ENCODE measurements at regions of chr7 and their contacts with region 1.

Region 1: GRCh38 chr7:362402-363096 is 72.6 kb downstream of the FOXL3 start:
- H3K4me3 ChIP-seq: no peak overlapping the region
- H3K27ac ChIP-seq: no peak overlapping the region
- H3K4me1 ChIP-seq: no peaks in the 10 kb centered on the region
- CTCF ChIP-seq: no peak

Region 2: DNA sequence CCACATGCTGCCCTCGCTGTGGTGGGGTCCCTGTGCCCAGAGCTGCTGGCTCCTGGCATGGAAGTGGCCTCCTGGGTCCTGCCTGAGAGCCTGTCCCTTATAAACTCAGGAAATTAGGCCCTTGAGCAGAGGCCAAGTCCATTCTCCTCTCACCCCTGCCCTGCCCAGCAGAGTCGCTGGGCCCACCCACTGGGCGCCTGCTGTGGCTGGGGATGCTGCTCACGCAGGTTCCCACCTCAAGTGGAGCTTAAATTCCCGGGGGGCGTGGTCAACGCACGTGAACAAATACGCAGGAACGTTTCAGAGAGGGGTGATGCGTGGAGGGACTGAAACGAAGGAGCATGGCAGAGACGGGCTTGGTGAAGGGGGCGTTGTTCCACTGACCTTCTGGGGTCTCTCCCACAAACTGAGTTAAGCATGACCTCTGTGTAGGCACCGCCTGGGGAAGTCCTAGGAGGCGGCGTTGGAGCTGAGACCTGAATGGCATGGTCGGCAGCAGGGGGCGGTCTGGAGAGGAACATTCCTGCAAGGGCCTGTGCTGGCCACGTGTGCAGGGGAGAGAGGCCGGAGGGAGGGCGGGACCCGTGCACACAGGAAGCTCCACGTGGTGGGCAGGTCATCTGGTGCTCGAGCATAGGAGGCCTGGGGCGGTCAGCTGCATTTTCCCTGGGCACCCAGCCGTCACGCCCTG is 142.3 kb before region 1 on chr7:
- CTCF ChIA-PET with region 1: no interaction called
- POLR2A ChIA-PET with region 1: no interaction called
- H3K4me3 ChIP-seq: no peak overlapping the region
- H3K27ac ChIP-seq: no peak overlapping the region
- H3K4me1 ChIP-seq: no peaks in the 10 kb centered on the region
- CTCF ChIP-seq: no peak

Region 3: GRCh38 chr7:240791-241421 is 121.6 kb before region 1 on chr7:
- CTCF ChIA-PET with region 1: no interaction called
- POLR2A ChIA-PET with region 1: no interaction called
- H3K4me3 ChIP-seq: no peak overlapping the region
- H3K27ac ChIP-seq: no peak overlapping the region
- H3K4me1 ChIP-seq: no peaks in the 10 kb centered on the region
- CTCF ChIP-seq: no peak

Region 4: DNA sequence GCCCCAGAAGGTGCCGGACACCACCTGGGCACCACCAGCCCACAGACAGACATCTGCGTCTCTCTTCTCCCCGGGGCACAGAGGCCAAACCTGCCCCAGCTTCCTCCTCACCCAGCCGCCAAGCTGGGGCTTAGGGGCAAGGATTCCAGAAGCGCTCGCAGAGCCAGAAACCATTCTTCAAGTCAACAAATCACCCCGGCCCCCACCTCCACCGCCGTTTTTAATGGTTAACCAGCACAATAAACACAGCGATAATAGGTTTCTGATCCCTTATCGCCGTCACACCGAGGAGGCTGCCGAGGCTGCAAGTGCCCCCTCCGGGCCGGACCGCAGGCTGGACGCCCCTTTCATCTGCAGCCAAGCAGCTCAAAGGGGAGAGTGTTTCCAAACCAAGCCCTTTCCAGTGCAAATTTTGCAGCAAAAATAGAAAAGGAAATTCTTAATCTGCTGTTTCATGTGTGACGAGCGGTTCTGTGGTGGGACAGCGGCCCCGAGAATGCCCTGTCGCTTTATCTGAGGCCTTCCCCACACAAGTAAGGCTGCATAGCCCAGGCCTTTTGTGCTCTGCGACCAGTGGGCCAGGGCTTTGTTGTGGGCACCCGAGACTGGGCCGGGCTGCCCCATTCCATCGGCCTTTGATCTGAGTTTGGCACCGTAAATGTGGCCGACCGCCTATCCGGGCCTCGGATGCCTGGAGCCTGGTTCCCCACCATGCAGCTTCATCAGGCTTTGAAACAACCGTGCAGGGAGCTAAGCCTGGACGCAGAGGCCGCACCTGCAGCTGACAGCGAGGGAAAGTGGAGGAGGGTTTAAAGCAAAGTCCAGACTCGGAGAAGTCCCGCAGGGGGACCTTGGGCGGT is 10.6 kb after region 1 on chr7:
- CTCF ChIA-PET with region 1: no interaction called
- POLR2A ChIA-PET with region 1: no interaction called
- H3K4me3 ChIP-seq: no peak overlapping the region
- H3K27ac ChIP-seq: no peak overlapping the region
- H3K4me1 ChIP-seq: no peaks in the 10 kb centered on the region
- CTCF ChIP-seq: no peak

Region 5: DNA sequence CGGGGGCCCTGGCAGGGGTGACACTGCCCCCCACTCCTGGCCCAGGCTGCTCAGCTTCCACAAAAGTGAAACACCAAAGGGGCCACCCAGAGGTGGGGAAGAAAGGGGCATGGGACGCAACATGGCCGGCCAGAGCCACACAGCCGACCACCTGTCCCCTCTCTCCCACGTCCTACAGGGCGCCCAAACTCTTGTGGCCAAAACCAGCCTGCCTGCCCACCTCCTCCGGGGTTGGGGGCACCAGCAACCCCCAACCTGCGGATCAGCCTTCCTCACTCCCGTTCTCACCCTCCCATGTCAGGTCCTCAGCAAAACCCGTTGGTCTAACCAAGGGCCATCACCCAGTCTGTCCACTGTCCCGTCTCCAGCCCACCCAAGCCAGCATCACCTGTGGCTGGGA is 284.4 kb after region 1 on chr7:
- CTCF ChIA-PET with region 1: no interaction called
- POLR2A ChIA-PET with region 1: interaction called, 11 read pairs
- H3K4me3 ChIP-seq: no peak overlapping the region
- H3K27ac ChIP-seq: no peak overlapping the region
- H3K4me1 ChIP-seq: no peaks in the 10 kb centered on the region
- CTCF ChIP-seq: no peak

Measured in HEK293 (cell line).